MCF 10A (cell line): ENCODE measurements at regions of chr2 and their contacts with region 1.

Region 1: DNA sequence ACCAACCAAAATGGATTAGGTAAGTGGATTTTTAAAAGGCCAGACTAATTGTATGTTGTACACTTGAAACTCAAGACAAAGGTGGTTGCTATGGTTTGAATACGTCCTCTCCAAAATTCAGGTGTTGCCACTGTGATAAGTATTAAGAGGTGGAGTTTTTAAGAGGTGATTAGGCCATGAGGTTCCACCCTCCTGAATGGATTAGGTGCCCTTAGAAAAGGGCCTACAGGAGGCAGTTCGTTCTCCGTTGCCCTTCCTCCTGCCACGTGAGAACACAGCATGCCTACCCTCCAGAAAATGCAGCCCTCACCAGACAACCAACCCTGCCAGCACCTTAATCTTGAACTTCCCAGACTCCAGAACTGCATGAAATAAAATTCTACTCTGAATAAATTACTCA is 51.2 kb downstream of the CHMP3 start:
- DNase-seq: no peak
- H3K4me3 Mint-ChIP-seq: peak overlapping the region; percentile 11
- H3K27ac Mint-ChIP-seq: peak overlapping the region; percentile 57
- H3K4me1 Mint-ChIP-seq: peaks cover 6% of the 10 kb centered on the region
- H3K27me3 Mint-ChIP-seq: no peaks in the 10 kb centered on the region
- CTCF ChIP-seq: no peak

Region 2: DNA sequence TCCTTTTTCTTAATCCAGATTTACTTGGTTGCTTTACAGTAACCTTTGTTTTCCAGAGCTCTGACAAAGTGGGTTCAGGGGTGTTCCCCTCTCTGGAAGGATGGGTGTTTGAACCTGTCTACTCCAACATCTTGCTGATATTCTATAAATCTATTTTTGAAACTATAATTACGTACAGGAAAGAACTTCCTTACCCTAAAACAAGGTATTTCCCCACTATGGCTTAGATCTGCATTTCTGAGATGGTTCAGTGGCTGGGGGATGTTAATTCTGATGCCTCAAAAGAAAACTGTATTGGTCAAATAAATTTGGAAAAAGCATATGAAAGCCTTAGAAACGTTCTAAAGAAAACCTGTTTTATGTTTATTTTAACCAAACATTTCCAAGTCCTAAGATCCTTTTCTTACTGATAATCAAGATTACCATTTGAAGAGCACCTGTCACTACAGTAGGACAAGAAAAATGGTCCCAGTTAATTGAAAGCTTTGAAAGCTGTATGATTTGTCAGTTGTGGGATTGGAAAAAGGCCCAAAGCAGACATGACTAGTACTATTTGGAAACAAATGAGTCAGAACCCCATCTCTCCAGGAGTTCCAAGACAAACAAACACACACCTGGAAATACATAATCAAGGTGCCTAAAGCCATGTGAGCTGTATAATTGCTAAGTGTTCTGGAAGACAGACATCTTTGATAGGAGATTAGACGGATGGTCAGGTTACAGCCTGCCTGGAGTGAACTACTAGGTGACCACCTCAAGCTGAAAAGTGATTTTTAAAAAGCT is 13.4 kb before region 1 on chr2:
- CTCF ChIA-PET with region 1: interaction called, 5 read pairs
- POLR2A ChIA-PET with region 1: interaction called, 16 read pairs
- intact Hi-C with region 1: no loop called
- DNase-seq: peak; percentile 94
- H3K4me3 Mint-ChIP-seq: no peak overlapping the region
- H3K27ac Mint-ChIP-seq: peak overlapping the region; percentile 21
- H3K4me1 Mint-ChIP-seq: peaks cover 13% of the 10 kb centered on the region
- H3K27me3 Mint-ChIP-seq: no peaks in the 10 kb centered on the region
- CTCF ChIP-seq: no peak

Region 3: GRCh38 chr2:86522711-86523110 is 10.7 kb after region 1 on chr2:
- CTCF ChIA-PET with region 1: no interaction called
- POLR2A ChIA-PET with region 1: no interaction called
- intact Hi-C with region 1: no loop called
- DNase-seq: no peak
- H3K4me3 Mint-ChIP-seq: no peak overlapping the region
- H3K27ac Mint-ChIP-seq: no peak overlapping the region
- H3K4me1 Mint-ChIP-seq: no peaks in the 10 kb centered on the region
- H3K27me3 Mint-ChIP-seq: no peaks in the 10 kb centered on the region
- CTCF ChIP-seq: no peak